Spleen (tissue), 13 donors: ENCODE measurements at regions of chr2 and their contacts with region 1.

Region 1: GRCh38 chr2:221573430-221574230 is 1.5 kb upstream of the EPHA4 start:
- DNase-seq: peak; percentile 96
- H3K4me3 ChIP-seq: peak overlapping the region; percentile 60 to 84 (median 67)
- H3K27ac ChIP-seq: peak overlapping the region in 6 of 8 donors; percentile 74 to 81 (median 78)
- H3K4me1 ChIP-seq: peaks cover 5 to 58% (median 42%) of the 10 kb centered on the region in 6 donors
- H3K27me3 ChIP-seq: peaks cover 0 to 97% (median 40%) of the 10 kb centered on the region in 7 donors
- CTCF ChIP-seq: peak; percentile 89 to 99 (median 96)
- POLR2A ChIP-seq: no peak

Region 2: GRCh38 chr2:219736209-219736608 is 1837.4 kb before region 1 on chr2:
- intact Hi-C with region 1: loop called (anchors 5 kb)
- DNase-seq: no peak
- H3K4me3 ChIP-seq: no peak overlapping the region
- H3K27ac ChIP-seq: no peak overlapping the region
- H3K4me1 ChIP-seq: no peaks in the 10 kb centered on the region
- H3K27me3 ChIP-seq: peaks cover 0 to 21% (median 0%) of the 10 kb centered on the region in 7 donors
- CTCF ChIP-seq: peak in 5 of 11 experiments; percentile 25 to 45 (median 35)
- POLR2A ChIP-seq: no peak

Region 3: GRCh38 chr2:220687231-220687843 is 886.3 kb before region 1 on chr2:
- intact Hi-C with region 1: loop called (anchors 2 kb)
- DNase-seq: peak; percentile 77
- H3K4me3 ChIP-seq: no peak overlapping the region
- H3K27ac ChIP-seq: no peak overlapping the region
- H3K4me1 ChIP-seq: no peaks in the 10 kb centered on the region
- H3K27me3 ChIP-seq: peaks cover 0 to 4% (median 0%) of the 10 kb centered on the region in 7 donors
- CTCF ChIP-seq: peak; percentile 52 to 84 (median 75)
- POLR2A ChIP-seq: no peak

Region 4: GRCh38 chr2:221969087-221969829 is 395.6 kb after region 1 on chr2:
- intact Hi-C with region 1: loop called (anchors 5 kb)
- DNase-seq: no peak
- H3K4me3 ChIP-seq: no peak overlapping the region
- H3K27ac ChIP-seq: no peak overlapping the region
- H3K4me1 ChIP-seq: no peaks in the 10 kb centered on the region
- H3K27me3 ChIP-seq: peaks cover 0 to 6% (median 0%) of the 10 kb centered on the region in 7 donors
- CTCF ChIP-seq: peak in 9 of 11 experiments; percentile 7 to 58 (median 35)
- POLR2A ChIP-seq: no peak